ENCODE measurements at regions of chr7 and their contacts with region 1.

Region 1: DNA sequence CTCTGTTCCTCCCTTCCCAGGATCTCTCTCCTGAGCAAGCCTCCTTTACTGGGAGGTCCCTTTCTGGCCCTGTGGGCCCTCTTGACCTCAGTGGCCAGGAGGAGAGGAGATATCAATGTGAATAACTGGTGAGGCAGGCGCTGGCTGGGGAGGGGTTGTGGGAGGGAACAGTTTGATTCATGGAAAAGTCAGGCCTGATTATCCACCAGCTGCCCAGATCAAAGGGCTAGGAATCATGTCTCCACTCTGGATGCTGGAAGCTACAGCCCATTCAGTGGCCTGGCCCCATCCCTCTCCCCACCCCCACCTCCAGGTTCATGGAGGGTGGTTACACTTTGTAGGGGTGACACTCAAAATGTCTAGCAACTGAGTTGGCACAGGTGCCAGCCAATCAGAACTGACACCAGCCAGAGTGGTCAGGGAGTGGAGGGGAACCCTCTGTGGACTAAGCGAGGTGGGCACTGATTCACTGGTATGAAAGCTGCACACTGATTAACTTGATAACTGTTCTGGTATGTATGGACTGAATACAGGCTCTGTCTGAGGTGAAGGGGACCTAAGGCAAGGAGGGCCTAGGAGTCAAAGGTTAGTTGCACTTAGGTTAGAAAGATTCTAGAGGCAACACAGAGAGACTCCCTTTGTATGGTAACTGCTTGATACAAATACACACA is 4.8 kb downstream of the PRRT4 start:
- DNase-seq: no peak
- ATAC-seq: no peak
- H3K4me3 Mint-ChIP-seq: no peak overlapping the region
- H3K27ac Mint-ChIP-seq: no peak overlapping the region
- H3K4me1 Mint-ChIP-seq: peaks cover 12% of the 10 kb centered on the region
- H3K27me3 Mint-ChIP-seq: peaks cover 44% of the 10 kb centered on the region

Region 2: GRCh38 chr7:128343554-128344430 is 12.9 kb before region 1 on chr7 and contains the start of gene RBM28:
- CTCF ChIA-PET with region 1: interaction called, 10 read pairs
- POLR2A ChIA-PET with region 1: interaction called, 3 read pairs
- DNase-seq: peak; percentile 90
- ATAC-seq: peak; percentile 98
- H3K4me3 Mint-ChIP-seq: peak within 1 kb of the TSS; percentile 91
- H3K27ac Mint-ChIP-seq: peak within 1 kb of the TSS; percentile 93
- H3K4me1 Mint-ChIP-seq: peaks cover 23% of the 10 kb centered on the region
- H3K27me3 Mint-ChIP-seq: peaks cover 12% of the 10 kb centered on the region
- total RNA-seq, gene RBM28: 40.4 to 43.3 TPM